ENCODE measurements at regions of chrX and their contacts with region 1.

Region 1: DNA sequence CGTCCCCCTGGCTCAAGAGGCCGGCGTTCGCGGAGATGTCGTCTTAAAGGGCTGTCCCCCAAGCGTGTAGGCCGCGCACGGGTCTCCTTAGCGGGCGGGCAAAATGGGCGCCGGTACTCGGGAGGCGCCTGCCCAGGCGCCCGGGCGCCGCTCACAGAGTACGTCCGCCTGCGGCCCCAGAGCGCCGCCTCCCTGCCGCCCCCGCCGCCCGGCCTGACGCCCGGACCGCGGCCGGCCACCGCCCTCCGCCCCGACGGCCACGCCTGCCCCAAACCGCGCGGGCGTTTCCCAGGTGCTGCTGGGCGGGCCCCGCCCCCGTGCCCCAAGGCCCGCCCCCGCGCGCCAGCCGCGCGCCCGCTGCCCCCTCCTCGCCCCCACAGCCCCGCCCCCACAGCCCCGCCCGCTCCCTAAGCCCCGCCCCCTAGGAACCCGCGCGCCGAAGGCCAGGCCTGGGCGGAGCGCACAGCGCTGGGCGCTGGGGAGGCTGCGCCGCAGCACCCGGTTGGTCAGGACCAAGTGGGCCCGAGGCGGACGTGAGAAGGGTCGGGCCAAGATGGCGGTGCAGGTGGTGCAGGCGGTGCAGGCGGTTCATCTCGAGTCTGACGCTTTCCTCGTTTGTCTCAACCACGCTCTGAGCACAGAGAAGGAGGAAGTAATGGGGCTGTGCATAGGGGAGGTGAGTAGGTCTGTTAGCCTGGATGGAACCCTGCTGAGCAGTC is at the starts of genes BRCC3, CMC4 and MTCP1:
- DNase-seq: peak; percentile 89
- H3K4me3 ChIP-seq: peak within 1 kb of the TSS; percentile 52 to 61 (median 58)
- H3K27ac ChIP-seq: peak within 1 kb of the TSS; percentile 85 to 88 (median 88)
- H3K4me1 ChIP-seq: peaks cover 0 to 26% (median 5%) of the 10 kb centered on the region in 4 donors
- H3K27me3 ChIP-seq: no peaks in the 10 kb centered on the region
- CTCF ChIP-seq: no peak
- EP300 ChIP-seq: no peak
- POLR2A ChIP-seq: peak; percentile 31 to 38
- total RNA-seq, gene BRCC3: 12.8 to 15.3 (median 14.2) TPM
- total RNA-seq, gene CMC4: 19.4 to 37.2 (median 30.2) TPM
- total RNA-seq, gene MTCP1: 3.1 to 3.9 (median 3.7) TPM

Region 2: DNA sequence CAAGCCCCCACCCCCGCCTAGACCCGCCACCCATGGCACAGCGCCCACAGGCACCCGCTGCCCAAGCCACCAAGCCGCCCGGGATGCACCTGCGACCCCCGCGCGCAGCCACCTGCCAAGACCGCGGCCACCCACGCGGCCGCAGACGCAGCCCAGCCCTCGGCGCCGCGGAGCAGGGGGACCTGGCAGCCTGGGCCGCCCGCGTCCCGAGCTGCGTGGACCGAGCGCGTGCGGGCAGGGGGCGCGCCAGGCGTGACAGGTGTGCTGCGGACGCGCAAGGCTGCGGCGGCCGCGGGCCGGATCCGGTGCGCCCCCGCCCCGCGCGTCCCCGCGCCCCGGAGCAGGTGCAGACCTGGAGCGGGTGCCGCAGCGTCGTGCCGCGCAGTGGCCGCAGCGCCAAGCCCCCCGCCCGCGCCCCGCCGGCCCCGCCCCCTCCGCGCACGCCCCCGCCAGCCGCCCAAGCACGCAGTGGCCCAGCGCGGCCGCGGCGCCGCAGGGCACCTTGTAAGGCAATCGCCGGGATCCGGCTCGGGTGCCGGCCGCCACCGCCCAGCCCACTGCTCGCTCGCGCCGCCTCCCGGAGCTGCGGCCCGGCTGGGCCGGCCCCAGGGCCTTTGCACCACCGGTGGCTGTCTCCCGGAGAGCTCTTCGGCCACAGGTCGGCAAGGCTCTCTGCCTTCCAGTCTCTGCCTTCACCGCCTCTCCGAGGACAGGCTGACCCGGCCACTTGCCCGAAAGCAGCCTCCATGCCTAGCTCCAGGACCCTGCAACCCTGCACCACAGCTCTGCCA is 1397.5 kb before region 1 on chrX and contains the start of gene PNCK:
- intact Hi-C with region 1: no loop called
- DNase-seq: peak; percentile 66
- H3K4me3 ChIP-seq: peak within 1 kb of the TSS; percentile 22 to 52 (median 46)
- H3K27ac ChIP-seq: peak within 1 kb of the TSS; percentile 59 to 82 (median 78)
- H3K4me1 ChIP-seq: no peaks in the 10 kb centered on the region
- H3K27me3 ChIP-seq: no peaks in the 10 kb centered on the region
- CTCF ChIP-seq: no peak
- EP300 ChIP-seq: no peak
- POLR2A ChIP-seq: no peak
- total RNA-seq, gene PNCK: 33.9 to 135 (median 64.2) TPM

Region 3: DNA sequence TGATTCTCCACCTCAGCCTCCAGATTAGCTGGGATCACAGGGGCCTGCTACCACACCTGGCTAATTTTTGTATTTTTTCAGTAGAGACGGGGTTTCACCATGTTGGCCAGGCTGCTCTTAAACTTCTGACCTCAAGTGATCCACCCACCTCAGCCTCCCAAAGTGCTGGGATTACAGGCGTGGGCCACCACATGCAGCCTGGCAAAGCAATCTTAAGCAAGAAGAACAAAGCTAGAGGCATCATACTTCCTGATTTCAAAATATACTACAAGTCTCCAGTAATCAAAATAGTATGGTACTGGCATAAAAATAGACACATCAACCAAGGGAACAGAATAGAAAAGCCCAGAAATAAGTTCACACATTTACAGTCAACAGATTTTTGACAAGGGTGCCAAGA is 197.8 kb before region 1 on chrX:
- intact Hi-C with region 1: no loop called
- DNase-seq: no peak
- H3K4me3 ChIP-seq: no peak overlapping the region
- H3K27ac ChIP-seq: no peak overlapping the region
- H3K4me1 ChIP-seq: no peaks in the 10 kb centered on the region
- H3K27me3 ChIP-seq: no peaks in the 10 kb centered on the region
- CTCF ChIP-seq: no peak
- EP300 ChIP-seq: no peak
- POLR2A ChIP-seq: no peak

Region 4: GRCh38 chrX:155026726-155027508 is 44.2 kb before region 1 on chrX and contains the start of gene FUNDC2:
- intact Hi-C with region 1: loop called (anchors 2 kb)
- DNase-seq: peak; percentile 97
- H3K4me3 ChIP-seq: peak within 1 kb of the TSS; percentile 46 to 65 (median 62)
- H3K27ac ChIP-seq: peak within 1 kb of the TSS; percentile 90 to 96 (median 94)
- H3K4me1 ChIP-seq: peaks cover 0 to 14% (median 9%) of the 10 kb centered on the region in 4 donors
- H3K27me3 ChIP-seq: no peaks in the 10 kb centered on the region
- CTCF ChIP-seq: no peak
- EP300 ChIP-seq: peak; percentile 35 to 85 (median 74)
- POLR2A ChIP-seq: peak; percentile 29 to 36
- total RNA-seq, gene FUNDC2: 83.1 to 101 (median 97.6) TPM

Measured in sigmoid colon (tissue), 7 donors.